ENCODE measurements at regions of chr11 and their contacts with region 1.

Region 1: DNA sequence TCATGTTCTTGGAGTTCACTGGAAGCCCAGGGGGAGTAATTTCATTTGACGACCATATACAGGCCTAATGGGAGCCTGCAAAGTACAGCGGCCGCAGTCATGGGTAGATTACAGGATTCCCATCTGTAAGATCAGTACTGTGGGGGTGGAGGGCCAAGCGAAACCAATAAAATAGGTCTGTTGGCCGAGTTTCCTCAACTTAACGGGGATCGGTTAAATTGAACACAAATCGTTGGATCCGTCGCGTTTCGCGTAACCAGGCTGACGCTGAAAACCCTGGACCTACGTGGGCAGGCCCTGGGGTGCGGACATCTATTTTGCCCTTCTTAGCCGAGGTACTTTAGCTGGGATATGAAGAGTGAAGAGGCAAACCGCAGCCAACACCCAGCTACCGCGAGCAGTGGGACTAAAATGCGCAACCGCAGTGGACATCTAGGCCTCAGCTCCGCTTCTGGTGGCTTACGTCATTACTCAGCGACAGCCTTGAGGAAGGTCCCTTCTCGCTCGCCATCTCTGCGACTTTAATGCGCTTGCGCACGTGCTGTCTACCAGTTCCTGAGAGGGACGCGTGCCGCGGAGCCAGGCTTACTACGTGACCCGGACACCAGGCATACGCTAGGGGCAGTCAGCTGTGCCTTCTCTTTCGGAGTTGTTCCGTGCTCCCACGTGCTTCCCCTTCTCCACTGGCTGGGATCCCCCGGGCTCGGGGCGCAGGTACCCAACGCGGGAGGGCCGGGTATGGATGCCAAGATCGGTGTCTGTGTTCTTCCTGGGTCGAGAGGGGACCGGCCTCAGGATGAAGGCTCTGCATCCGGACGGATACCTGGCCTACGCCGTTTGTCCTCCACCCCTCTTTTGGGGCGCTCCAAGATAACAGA is at the start of gene NAT10:
- DNase-seq: peak; percentile 99
- H3K4me3 ChIP-seq: peak within 1 kb of the TSS; percentile 66 to 95 (median 74)
- H3K27ac ChIP-seq: peak within 1 kb of the TSS; percentile 89 to 92 (median 90)
- H3K4me1 ChIP-seq: peaks cover 19 to 31% (median 26%) of the 10 kb centered on the region in 4 donors
- H3K27me3 ChIP-seq: no peaks in the 10 kb centered on the region
- CTCF ChIP-seq: peak in 2 of 3 experiments; percentile 18 to 31
- EP300 ChIP-seq: peak; percentile 11
- POLR2A ChIP-seq: peak; percentile 18
- total RNA-seq, gene NAT10: 19.9 to 27.2 (median 20.6) TPM

Region 2: GRCh38 chr11:33996498-33997454 is 108.5 kb before region 1 on chr11:
- intact Hi-C with region 1: loop called (anchors 5 kb)
- DNase-seq: no peak
- H3K4me3 ChIP-seq: peak overlapping the region in 2 of 4 donors; percentile 12 to 31
- H3K27ac ChIP-seq: no peak overlapping the region
- H3K4me1 ChIP-seq: peaks cover 5 to 15% (median 11%) of the 10 kb centered on the region in 4 donors
- H3K27me3 ChIP-seq: peaks cover 0 to 6% (median 0%) of the 10 kb centered on the region in 4 donors
- CTCF ChIP-seq: peak; percentile 75 to 88 (median 76)
- EP300 ChIP-seq: no peak
- POLR2A ChIP-seq: no peak

Region 3: DNA sequence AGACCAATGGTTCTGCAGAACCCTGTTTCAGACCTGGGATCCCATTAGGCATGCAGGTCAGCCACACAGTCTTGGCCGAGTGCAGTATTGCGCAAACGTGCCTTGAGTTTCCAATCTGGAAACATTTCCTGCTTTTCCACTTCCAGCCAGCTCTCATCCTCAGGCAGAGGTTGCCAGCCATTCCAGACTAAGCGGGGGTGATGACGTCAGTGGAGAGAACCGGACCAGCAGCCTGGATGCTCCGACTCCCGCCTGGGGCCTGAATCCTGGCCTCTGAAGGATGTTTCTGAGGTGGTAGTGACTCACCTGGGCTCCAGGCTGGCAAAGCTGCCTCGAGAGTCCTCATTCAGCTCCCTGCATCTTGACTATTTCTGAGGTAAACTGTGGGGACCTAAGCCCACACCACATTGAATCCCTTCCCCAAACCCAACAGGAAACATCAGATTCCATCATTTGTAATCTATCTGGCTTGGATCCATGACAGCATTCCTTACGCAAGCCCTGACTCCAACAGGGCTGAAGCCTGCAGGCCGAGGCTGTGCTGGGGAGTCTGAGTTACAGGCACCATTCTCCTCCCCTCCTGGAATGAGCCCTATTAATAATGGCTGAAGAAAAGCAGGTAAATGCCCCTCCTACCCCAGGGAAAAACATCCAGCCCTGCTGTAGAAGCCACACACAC is 169.5 kb after region 1 on chr11:
- intact Hi-C with region 1: no loop called
- DNase-seq: peak; percentile 95
- H3K4me3 ChIP-seq: no peak overlapping the region
- H3K27ac ChIP-seq: peak overlapping the region; percentile 40 to 69 (median 54)
- H3K4me1 ChIP-seq: peaks cover 0 to 16% (median 12%) of the 10 kb centered on the region in 4 donors
- H3K27me3 ChIP-seq: no peaks in the 10 kb centered on the region
- CTCF ChIP-seq: no peak
- EP300 ChIP-seq: no peak
- POLR2A ChIP-seq: no peak

Region 4: GRCh38 chr11:34438529-34439507 is 333.5 kb after region 1 on chr11 and contains the start of gene CAT:
- intact Hi-C with region 1: loop called (anchors 10 kb)
- DNase-seq: peak; percentile 99
- H3K4me3 ChIP-seq: peak within 1 kb of the TSS; percentile 70 to 93 (median 82)
- H3K27ac ChIP-seq: peak within 1 kb of the TSS; percentile 80 to 95 (median 88)
- H3K4me1 ChIP-seq: peaks cover 26 to 43% (median 37%) of the 10 kb centered on the region in 4 donors
- H3K27me3 ChIP-seq: no peaks in the 10 kb centered on the region
- CTCF ChIP-seq: no peak
- EP300 ChIP-seq: no peak
- POLR2A ChIP-seq: peak; percentile 57
- total RNA-seq, gene CAT: 72.8 to 163 (median 84.4) TPM